Dorsolateral prefrontal cortex (tissue), 120 donors: ENCODE measurements at regions of chr2 and their contacts with region 1.

Region 1: DNA sequence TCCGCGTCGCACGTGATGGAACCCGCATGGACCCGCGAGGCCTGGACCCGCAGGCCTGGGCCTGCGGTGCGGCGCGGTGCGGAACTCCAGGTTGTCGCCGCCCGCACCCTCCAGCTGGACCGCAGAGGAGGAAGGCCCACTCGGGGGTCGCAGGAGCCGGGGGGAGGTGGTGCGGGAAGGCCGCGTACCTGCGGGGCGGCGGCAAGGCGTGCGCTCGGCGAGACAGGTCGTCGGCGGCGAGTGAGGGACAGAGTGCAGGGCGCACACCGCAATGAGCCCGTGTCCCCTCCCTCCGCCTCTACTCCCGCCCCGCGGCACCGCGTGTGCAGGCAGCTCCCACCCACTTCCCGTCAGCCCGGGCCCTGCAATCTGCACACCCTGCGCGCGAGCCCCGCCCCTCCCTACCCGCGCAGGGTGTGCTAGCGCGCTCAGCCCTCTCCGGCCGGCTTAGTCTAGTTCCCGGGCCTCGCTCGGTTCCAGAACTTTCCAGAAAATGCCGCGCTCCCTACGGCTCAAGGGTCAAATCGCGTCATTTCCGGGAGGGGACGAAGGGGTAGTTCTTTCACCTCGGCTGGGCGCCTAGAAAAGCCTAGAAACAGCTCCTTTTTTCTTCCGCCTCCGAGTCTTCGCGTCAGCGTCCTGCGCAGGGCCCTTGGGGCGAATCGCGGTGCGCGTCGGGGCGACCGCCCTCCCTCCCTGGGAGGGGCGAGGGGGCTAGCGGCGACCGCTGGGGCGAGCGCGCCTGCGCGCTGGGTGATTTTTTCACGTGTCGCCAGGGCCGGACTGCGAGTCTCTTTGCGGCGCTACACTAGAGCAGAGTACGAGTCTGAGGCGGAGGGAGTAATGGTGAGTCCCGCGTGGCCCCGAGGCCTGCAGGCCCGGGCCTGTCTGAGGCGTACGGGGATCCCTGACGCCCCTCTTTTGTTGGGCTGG is at the starts of genes HSPD1 and HSPE1:
- DNase-seq: peak; percentile 95 to 99 (median 97)
- H3K4me3 ChIP-seq: peak within 1 kb of the TSS; percentile 65 to 100 (median 92)
- H3K27ac ChIP-seq: peak within 1 kb of the TSS; percentile 96 to 100 (median 100)
- H3K27me3 ChIP-seq: no peaks in the 10 kb centered on the region
- CTCF ChIP-seq: peak in 17 of 56 donors; percentile 3 to 30 (median 10)
- total RNA-seq, gene HSPD1: 104 to 555 (median 149) TPM
- total RNA-seq, gene HSPE1: 54.9 to 298 (median 81.8) TPM

Region 2: DNA sequence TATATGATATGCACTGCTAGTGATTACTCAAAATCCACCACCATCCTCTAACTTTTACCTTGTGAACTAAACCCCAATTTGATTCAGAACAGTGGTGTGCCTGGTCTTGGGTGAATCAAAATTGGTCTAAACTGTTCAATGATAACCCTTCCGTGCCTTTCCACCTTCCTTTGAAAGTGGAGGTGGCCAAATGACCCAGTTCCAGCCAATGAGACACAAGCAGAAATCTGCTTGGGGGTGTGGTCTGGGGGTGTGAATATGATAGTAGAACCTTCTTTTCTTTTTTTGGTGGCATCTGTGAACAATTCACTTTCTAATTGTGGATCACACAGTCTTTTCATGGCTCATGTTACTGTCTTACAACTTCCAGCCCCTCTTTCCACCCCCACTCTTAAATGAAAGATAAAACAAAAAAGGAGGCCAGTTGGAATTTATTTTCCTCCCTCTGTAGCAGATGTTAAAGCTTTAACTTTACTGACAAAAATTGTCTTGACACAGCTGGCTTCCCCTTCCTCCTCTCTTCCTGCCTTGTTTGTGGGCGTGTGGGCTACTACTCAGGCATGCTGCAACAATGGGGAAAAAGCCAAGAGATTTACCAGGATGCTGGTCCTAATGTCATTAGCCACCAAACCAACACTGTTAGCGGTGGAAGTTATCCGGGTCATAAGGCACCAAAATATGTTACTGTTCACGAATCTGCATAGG is 130.5 kb before region 1 on chr2:
- intact Hi-C with region 1: no loop called
- DNase-seq: no peak
- H3K4me3 ChIP-seq: no peak overlapping the region
- H3K27ac ChIP-seq: no peak overlapping the region
- H3K27me3 ChIP-seq: no peaks in the 10 kb centered on the region
- CTCF ChIP-seq: no peak

Region 3: DNA sequence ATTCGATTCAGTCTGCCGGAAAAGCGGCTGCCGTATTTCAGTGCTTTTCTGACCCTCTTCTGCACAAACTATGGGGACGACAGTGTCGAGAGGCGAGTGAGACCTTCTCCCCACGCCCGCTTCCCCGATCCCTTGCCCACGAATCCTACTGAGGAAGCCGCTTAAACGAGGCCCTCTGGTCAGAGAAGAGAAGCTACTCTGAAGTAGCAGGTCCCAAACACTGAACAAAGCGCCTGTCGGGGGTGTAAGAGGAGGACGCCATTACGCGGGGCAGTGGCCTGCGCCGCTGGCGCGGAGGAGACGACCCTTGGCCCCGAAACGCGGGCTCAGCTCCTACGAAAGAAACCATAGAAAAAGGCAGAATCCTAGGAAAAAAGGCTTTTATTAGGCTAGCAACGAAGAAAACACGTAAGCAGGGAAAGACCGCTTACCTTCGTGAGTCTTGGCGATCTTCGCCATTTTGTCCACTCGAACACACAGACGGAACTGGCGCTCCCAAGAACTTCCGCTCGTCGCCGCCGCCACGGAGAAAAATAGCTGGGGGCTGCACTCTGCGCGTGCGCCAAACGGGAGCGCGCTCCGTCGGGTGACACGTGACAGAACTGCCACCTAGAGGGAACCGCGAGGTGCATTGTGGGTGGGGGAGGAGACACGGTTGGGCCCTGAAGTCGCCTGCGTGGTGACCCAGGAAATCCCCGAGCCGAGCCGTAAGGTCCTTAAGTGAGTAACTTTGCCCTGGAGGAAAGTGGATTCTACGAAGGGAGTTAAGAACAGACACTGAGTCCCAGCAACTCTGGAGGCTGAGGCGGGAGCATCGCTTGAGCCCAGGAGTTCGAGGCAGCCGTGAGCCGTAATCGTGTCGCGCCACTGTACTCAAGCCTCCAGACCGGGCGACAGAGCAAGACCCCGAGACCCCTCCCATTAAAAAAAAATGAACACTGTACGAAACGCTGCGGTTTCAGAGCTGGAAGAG is 65.0 kb before region 1 on chr2 and contains the start of gene SF3B1:
- intact Hi-C with region 1: loop called (anchors 5 to 10 kb)
- DNase-seq: peak; percentile 96 to 99 (median 98)
- H3K4me3 ChIP-seq: peak within 1 kb of the TSS; percentile 52 to 100 (median 92)
- H3K27ac ChIP-seq: peak within 1 kb of the TSS; percentile 81 to 99 (median 96)
- H3K27me3 ChIP-seq: no peaks in the 10 kb centered on the region
- CTCF ChIP-seq: peak in 46 of 56 donors; percentile 7 to 65 (median 33)
- total RNA-seq, gene SF3B1: 151 to 275 (median 208) TPM

Region 4: GRCh38 chr2:197515739-197516392 is 16.0 kb after region 1 on chr2 and contains the start of gene MOB4:
- intact Hi-C with region 1: loop called (anchors 1 kb)
- DNase-seq: peak; percentile 84 to 96 (median 92)
- H3K4me3 ChIP-seq: peak within 1 kb of the TSS; percentile 67 to 100 (median 92)
- H3K27ac ChIP-seq: peak within 1 kb of the TSS; percentile 86 to 100 (median 98)
- H3K27me3 ChIP-seq: no peaks in the 10 kb centered on the region
- CTCF ChIP-seq: peak in 43 of 56 donors; percentile 12 to 56 (median 38)
- total RNA-seq, gene MOB4: 12.8 to 47.5 (median 26.2) TPM

Region 5: GRCh38 chr2:197628043-197628500 is 128.2 kb after region 1 on chr2:
- intact Hi-C with region 1: loop called in 1 of 2 experiments (anchors 5 kb)
- DNase-seq: peak in 9 of 10 donors; percentile 10 to 80 (median 53)
- H3K4me3 ChIP-seq: peak overlapping the region in 41 of 59 donors; percentile 1 to 55 (median 19)
- H3K27ac ChIP-seq: peak overlapping the region; percentile 70 to 99 (median 92)
- H3K27me3 ChIP-seq: no peaks in the 10 kb centered on the region
- CTCF ChIP-seq: peak in 2 of 56 donors; percentile 11 to 18